Right ventricle myocardium superior (tissue), 1 donor: ENCODE measurements at regions of chr15 and their contacts with region 1.

Region 1: GRCh38 chr15:46880791-46881190 is 836.5 kb upstream of the SEMA6D start:
- DNase-seq: no peak
- ATAC-seq: no peak

Region 2: DNA sequence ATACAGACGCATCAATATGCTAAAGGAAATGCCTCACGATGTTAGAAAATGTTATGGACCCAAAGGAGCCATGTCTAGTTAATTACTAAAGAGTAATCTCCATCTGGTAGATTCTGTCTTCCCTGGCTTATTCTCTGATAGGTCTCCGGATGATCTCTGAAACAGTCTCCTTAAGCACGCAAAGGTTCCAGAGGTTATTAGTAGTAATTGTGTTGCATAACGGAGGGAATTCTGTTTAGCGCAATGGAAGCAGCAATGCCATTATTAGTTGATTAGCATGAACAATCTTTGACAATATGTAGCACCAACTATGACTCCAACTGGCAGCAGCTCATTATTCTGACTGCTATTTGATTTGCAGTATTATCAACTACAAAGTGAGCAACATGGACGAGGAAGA is 115.9 kb before region 1 on chr15:
- intact Hi-C with region 1: no loop called
- DNase-seq: no peak
- ATAC-seq: no peak

Region 3: DNA sequence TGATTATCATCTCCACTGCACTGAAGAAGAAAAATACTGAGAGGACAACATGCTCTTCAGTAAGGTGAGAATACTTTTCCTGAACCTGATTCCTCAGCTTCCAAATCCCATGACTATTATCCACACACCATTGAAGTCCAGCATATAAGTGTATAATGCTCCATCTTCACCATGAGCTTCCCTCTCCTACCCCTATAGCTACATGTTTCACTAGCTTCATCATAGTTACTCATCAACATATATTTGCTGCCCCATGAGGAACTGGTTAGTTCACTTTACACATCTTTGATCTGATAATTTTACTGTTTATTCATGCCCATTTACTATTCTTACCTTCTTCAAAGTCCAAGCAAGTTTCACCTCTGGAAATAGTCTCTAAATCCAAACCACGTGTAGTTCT is 72.0 kb before region 1 on chr15:
- intact Hi-C with region 1: loop called (anchors 10 kb)
- DNase-seq: no peak
- ATAC-seq: no peak